ENCODE measurements at regions of chr10 and their contacts with region 1.

Region 1: DNA sequence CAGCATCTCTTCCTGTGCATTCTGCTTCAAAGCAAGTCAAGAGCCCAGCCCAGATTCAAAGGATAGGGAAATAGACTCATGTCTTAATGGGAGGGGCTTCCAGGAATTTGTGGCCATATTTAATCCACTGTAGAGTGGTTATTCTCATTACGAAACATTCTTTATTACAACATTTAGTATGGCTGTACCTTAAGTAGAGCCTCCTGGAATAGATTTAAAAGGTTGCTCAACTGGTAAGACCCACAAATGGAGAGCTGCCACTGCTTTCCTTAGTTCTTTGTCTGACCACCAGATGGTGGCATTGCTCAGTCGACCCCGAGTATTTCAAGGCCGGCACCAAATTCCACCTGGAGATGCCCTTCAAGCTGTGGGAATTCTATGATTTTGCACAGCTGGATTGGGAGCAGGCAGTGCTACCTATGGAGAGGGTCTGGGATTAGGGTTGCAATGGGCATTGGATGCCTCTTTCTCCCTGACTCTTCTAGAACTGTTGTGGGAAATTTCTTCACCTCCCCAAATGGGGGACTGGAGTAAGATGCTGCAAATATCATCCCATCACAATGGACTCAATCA is 102.2 kb downstream of the RBM20 start:
- DNase-seq: peak; percentile 75 to 80
- H3K4me3 ChIP-seq: no peak overlapping the region
- H3K4me3 Mint-ChIP-seq: no peak overlapping the region
- H3K27ac Mint-ChIP-seq: no peak overlapping the region
- H3K4me1 ChIP-seq: no peaks in the 10 kb centered on the region
- H3K4me1 Mint-ChIP-seq: no peaks in the 10 kb centered on the region
- H3K27me3 ChIP-seq: no peaks in the 10 kb centered on the region; the same call in 1 of the 2 replicates
- H3K27me3 Mint-ChIP-seq: no peaks in the 10 kb centered on the region
- CTCF ChIP-seq: peak; percentile 77 to 79

Region 2: DNA sequence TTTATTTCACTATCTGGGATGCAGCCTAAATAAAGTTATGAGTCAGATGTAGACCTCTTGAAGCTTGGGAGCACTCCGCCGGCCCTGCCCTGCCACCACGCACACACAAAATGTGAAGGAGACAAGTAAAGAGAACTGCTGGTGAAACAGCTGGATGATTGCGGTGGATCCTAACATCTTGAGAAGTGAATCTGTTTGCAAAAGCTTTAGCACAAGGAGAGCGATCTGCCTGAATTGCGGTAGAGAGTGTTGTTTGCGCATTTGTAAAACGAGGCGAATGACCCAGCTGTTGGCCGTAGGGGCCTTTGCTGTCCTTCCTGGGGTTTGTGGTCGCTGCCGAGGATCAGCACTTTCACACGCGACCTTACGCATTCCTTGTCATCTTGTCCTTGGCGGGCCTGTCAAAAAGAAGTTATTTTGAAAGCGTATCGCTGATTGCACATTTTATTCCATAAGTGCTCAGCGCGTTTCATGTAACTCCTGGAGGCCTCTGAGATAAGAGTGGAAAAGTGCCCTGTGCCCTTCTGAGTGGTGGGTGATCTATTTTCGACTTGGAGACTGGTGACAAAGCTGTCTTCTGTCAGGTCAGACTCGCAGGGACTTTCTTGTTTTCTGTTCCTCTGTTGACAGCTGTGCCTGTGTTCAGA is 61.4 kb before region 1 on chr10:
- CTCF ChIA-PET with region 1: no interaction called
- POLR2A ChIA-PET with region 1: no interaction called
- intact Hi-C with region 1: no loop called
- DNase-seq: no peak
- H3K4me3 ChIP-seq: no peak overlapping the region
- H3K4me3 Mint-ChIP-seq: no peak overlapping the region
- H3K27ac Mint-ChIP-seq: no peak overlapping the region
- H3K4me1 ChIP-seq: no peaks in the 10 kb centered on the region
- H3K4me1 Mint-ChIP-seq: peaks cover 7% of the 10 kb centered on the region
- H3K27me3 ChIP-seq: no peaks in the 10 kb centered on the region
- H3K27me3 Mint-ChIP-seq: no peaks in the 10 kb centered on the region
- CTCF ChIP-seq: no peak

Region 3: GRCh38 chr10:110774069-110775019 is 28.0 kb after region 1 on chr10:
- CTCF ChIA-PET with region 1: interaction called, 4 read pairs
- POLR2A ChIA-PET with region 1: no interaction called
- intact Hi-C with region 1: loop called (anchors 1 kb)
- DNase-seq: peak in 1 of 2 experiments; percentile 35
- H3K4me3 ChIP-seq: no peak overlapping the region
- H3K4me3 Mint-ChIP-seq: peak overlapping the region; percentile 51
- H3K27ac Mint-ChIP-seq: peak overlapping the region; percentile 98
- H3K4me1 ChIP-seq: peaks cover 34% of the 10 kb centered on the region
- H3K4me1 Mint-ChIP-seq: peaks cover 21% of the 10 kb centered on the region
- H3K27me3 ChIP-seq: no peaks in the 10 kb centered on the region
- H3K27me3 Mint-ChIP-seq: no peaks in the 10 kb centered on the region
- CTCF ChIP-seq: no peak

Region 4: DNA sequence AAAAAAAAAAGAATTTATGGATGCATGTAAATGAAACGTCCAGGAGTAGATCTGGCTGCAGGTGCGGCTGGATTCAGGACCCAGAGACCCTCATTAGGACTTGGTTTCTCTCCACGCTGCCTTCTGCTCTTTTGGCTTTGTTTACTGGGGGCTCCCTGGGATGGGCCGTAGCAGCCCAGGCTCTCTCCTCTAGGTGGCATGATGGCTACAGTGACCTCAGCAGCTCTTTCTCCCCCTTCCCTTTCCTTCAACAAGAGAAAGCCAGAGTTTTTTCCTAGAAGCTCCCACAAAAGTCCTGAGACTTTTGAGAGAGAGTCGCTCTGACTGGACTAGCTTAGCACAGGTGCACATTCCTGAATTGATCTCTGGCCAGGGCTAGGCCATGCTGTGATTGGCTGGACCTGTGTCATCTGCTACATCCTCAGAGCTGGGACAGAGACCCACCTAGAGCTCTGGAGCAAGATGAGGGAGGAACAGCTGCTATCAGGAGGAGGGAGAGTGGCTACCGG is 57.5 kb after region 1 on chr10:
- CTCF ChIA-PET with region 1: interaction called, 16 read pairs
- POLR2A ChIA-PET with region 1: no interaction called
- intact Hi-C with region 1: loop called (anchors 1 kb)
- DNase-seq: peak; percentile 55 to 72
- H3K4me3 ChIP-seq: no peak overlapping the region
- H3K4me3 Mint-ChIP-seq: no peak overlapping the region
- H3K27ac Mint-ChIP-seq: peak overlapping the region; percentile 68
- H3K4me1 ChIP-seq: peaks cover 6% of the 10 kb centered on the region
- H3K4me1 Mint-ChIP-seq: peaks cover 13% of the 10 kb centered on the region
- H3K27me3 ChIP-seq: no peaks in the 10 kb centered on the region
- H3K27me3 Mint-ChIP-seq: peaks cover 3% of the 10 kb centered on the region
- CTCF ChIP-seq: peak; percentile 55 to 92

Region 5: GRCh38 chr10:110871298-110872084 is 125.2 kb after region 1 on chr10 and contains the start of gene PDCD4:
- CTCF ChIA-PET with region 1: interaction called, 3 read pairs
- POLR2A ChIA-PET with region 1: interaction called, 3 read pairs
- intact Hi-C with region 1: loop called (anchors 5 kb)
- DNase-seq: peak; percentile 99 to 100
- H3K4me3 ChIP-seq: peak within 1 kb of the TSS; percentile 72
- H3K4me3 Mint-ChIP-seq: peak within 1 kb of the TSS; percentile 85
- H3K27ac Mint-ChIP-seq: peak within 1 kb of the TSS; percentile 93
- H3K4me1 ChIP-seq: peaks cover 10% of the 10 kb centered on the region; the same call in 1 of the 2 replicates
- H3K4me1 Mint-ChIP-seq: peaks cover 12% of the 10 kb centered on the region
- H3K27me3 ChIP-seq: no peaks in the 10 kb centered on the region
- H3K27me3 Mint-ChIP-seq: no peaks in the 10 kb centered on the region
- CTCF ChIP-seq: no peak
- total RNA-seq, gene PDCD4: 65.5 and 66.1 TPM in 2 replicates

Region 6: GRCh38 chr10:110918643-110919363 is 172.5 kb after region 1 on chr10 and contains the start of gene BBIP1:
- CTCF ChIA-PET with region 1: interaction called, 6 read pairs
- POLR2A ChIA-PET with region 1: interaction called, 10 read pairs
- intact Hi-C with region 1: loop called (anchors 1 kb)
- DNase-seq: no peak
- H3K4me3 ChIP-seq: peak within 1 kb of the TSS; percentile 83
- H3K4me3 Mint-ChIP-seq: peak within 1 kb of the TSS; percentile 79
- H3K27ac Mint-ChIP-seq: peak within 1 kb of the TSS; percentile 100
- H3K4me1 ChIP-seq: peaks cover 12% of the 10 kb centered on the region; the same call in 1 of the 2 replicates
- H3K4me1 Mint-ChIP-seq: peaks cover 15% of the 10 kb centered on the region
- H3K27me3 ChIP-seq: no peaks in the 10 kb centered on the region
- H3K27me3 Mint-ChIP-seq: no peaks in the 10 kb centered on the region
- CTCF ChIP-seq: peak in 1 of 2 experiments; percentile 6
- total RNA-seq, gene BBIP1: 16.7 and 19.2 TPM in 2 replicates

Region 7: DNA sequence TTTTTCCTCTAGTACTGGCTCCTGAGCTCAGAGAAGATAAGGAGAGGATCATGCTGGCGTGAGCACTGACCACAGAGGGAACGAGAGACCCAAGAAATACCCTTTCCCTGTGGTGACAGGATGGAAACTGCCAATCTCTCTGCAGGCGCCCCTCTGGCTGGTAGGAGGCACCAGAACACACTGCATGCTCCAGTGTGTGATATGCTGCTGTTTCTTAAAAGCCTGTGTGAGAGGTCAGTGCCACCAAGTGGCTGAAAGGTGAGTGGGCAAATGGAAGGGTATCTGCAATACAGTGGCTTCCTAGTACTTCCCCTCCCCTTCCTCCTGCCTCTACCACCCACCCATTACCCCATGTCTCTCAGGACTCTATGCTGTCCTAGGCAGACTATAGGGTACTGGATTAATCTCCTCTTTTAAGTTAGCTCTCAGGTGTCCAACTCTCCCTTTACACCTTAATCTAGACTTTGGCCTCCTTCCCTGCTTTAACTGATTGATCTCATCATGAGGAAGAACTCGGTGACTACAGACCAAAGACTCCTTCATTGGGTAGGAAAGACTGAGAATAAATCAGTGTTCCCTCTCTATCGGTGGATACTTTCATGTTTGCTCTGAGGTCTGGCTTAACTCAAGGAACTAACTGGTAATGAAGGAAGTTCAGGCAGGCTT is 614.1 kb after region 1 on chr10:
- CTCF ChIA-PET with region 1: no interaction called
- POLR2A ChIA-PET with region 1: no interaction called
- intact Hi-C with region 1: loop called (anchors 1 kb)
- DNase-seq: peak; percentile 59 to 66
- H3K4me3 ChIP-seq: no peak overlapping the region
- H3K4me3 Mint-ChIP-seq: no peak overlapping the region
- H3K27ac Mint-ChIP-seq: no peak overlapping the region
- H3K4me1 ChIP-seq: no peaks in the 10 kb centered on the region
- H3K4me1 Mint-ChIP-seq: peaks cover 5% of the 10 kb centered on the region
- H3K27me3 ChIP-seq: no peaks in the 10 kb centered on the region; the same call in 1 of the 2 replicates
- H3K27me3 Mint-ChIP-seq: peaks cover 11% of the 10 kb centered on the region
- CTCF ChIP-seq: peak; percentile 62 to 82

Measured in Caco-2 (cell line).